ENCODE measurements at regions of chr6 and their contacts with region 1.

Region 1: DNA sequence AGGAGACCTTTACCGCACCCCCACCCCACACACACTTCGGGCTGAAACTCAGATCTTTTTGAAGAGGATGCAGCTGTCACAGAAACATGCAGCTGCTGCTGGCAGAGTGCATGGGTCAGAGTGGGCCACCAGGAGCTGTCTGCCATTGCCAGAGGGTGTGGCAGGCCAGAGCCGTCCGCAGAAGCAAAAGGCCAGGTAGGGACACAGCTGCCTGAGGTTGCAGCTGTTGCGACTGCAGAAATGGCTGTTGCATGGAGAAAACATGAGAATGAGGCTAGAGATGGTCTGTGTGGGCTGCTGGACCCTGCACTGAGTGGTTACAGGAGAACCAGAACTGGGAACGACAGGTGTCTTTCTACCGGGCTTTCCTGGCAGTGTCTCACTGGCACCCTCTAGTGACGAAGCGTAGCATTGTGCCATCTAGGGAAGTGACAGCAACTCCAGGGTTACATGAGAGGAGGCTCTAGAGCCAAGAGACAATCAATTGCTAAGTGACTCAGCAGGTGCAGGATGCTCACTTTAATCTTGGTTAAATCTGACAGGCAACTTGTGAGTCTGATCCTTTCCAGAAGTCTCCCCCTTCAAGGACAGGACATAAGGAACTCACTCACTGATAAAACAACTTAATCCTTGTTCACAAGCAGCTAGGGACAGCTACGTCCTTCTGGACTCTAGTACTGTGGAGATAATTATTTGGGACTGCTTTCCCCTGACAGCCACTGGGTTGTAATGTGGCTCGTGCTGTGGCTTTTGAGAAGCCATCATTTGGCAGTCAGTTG is 29.1 kb upstream of the SERPINB9 start:
- DNase-seq: peak; percentile 92
- H3K4me3 ChIP-seq: peak overlapping the region; percentile 17
- H3K27ac ChIP-seq: no peak overlapping the region
- H3K4me1 ChIP-seq: no peaks in the 10 kb centered on the region
- H3K27me3 ChIP-seq: no peaks in the 10 kb centered on the region
- CTCF ChIP-seq: peak; percentile 91

Region 2: DNA sequence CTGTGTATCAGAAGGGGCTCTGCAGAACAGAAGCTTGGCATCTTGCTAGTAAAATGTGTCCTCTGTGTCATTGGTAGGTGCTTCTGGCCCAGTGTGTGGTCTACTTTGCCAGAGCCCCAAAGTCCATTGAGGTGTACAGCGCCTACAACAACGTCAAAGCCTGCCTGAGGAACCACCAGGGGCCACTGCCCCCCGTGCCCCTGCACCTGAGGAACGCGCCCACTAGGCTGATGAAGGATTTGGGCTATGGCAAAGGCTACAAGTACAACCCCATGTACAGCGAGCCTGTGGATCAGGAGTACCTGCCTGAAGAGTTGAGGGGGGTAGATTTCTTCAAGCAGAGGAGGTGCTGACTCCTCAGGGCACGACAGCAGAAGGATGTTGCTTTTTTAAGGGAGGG is 147.2 kb before region 1 on chr6:
- intact Hi-C with region 1: loop called (anchors 5 kb)
- DNase-seq: no peak
- H3K4me3 ChIP-seq: no peak overlapping the region
- H3K27ac ChIP-seq: no peak overlapping the region
- H3K4me1 ChIP-seq: no peaks in the 10 kb centered on the region
- H3K27me3 ChIP-seq: no peaks in the 10 kb centered on the region
- CTCF ChIP-seq: no peak

Region 3: GRCh38 chr6:2853761-2854395 is 78.3 kb before region 1 on chr6:
- intact Hi-C with region 1: loop called (anchors 5 kb)
- DNase-seq: no peak
- H3K4me3 ChIP-seq: no peak overlapping the region
- H3K27ac ChIP-seq: peak overlapping the region; percentile 42
- H3K4me1 ChIP-seq: no peaks in the 10 kb centered on the region
- H3K27me3 ChIP-seq: no peaks in the 10 kb centered on the region
- CTCF ChIP-seq: peak; percentile 24

Region 4: DNA sequence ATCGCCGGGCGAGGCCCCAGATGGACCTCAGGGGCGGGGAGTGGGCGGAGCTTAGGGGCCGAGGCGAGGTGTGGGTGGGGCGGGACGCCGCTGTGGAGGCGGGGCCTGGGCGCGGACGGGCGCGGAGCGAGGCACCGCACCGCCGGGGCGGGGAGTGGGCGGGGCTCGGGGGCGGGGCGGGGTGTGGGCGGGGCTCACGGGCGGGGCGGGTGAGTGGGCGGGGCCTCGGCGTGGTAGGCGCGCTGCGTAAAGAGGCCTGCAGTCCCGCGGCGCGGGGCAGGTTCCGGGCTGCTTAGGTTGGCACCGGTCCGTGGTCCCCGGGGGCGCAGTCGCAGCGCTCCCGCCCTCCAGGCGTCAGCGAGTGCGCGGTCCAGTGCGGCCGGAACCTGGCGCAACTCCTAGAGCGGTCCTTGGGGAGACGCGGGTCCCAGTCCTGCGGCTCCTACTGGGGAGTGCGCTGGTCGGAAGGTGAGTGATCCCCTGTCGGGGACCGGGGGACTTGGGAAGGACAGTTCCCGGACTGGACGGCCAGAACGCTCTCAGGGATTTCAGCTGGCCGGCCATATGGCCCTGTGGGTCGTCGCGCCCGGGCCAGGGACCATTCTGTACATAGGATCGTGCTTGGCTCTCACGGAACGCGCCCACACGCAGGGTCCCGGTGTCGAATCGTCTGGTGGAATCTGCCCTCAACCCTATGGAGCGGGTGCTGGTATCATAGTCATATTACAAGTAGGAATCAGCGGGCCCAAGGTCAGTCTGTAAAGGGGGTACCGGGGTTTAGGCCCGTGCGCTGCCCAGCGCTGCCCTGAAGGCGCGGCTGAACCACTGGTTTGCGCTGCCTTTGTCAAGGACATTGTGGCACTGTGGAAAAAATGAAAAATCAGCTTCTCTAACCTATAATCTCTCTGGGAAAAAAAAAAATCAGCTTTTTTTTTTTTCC is 67.7 kb after region 1 on chr6 and contains the start of gene NQO2:
- intact Hi-C with region 1: no loop called
- DNase-seq: peak; percentile 98
- H3K4me3 ChIP-seq: peak within 1 kb of the TSS; percentile 86
- H3K27ac ChIP-seq: peak within 1 kb of the TSS; percentile 70
- H3K4me1 ChIP-seq: peaks cover 5% of the 10 kb centered on the region
- H3K27me3 ChIP-seq: no peaks in the 10 kb centered on the region
- CTCF ChIP-seq: no peak
- total RNA-seq, gene NQO2: 14.1 to 19.0 TPM

Region 5: GRCh38 chr6:3023663-3024483 is 91.7 kb after region 1 on chr6:
- intact Hi-C with region 1: no loop called
- DNase-seq: peak; percentile 96
- H3K4me3 ChIP-seq: peak overlapping the region; percentile 20
- H3K27ac ChIP-seq: peak overlapping the region; percentile 78
- H3K4me1 ChIP-seq: no peaks in the 10 kb centered on the region
- H3K27me3 ChIP-seq: no peaks in the 10 kb centered on the region
- CTCF ChIP-seq: no peak